Tibial artery (tissue), 4 donors: ENCODE measurements at regions of chr18 and their contacts with region 1.

Region 1: DNA sequence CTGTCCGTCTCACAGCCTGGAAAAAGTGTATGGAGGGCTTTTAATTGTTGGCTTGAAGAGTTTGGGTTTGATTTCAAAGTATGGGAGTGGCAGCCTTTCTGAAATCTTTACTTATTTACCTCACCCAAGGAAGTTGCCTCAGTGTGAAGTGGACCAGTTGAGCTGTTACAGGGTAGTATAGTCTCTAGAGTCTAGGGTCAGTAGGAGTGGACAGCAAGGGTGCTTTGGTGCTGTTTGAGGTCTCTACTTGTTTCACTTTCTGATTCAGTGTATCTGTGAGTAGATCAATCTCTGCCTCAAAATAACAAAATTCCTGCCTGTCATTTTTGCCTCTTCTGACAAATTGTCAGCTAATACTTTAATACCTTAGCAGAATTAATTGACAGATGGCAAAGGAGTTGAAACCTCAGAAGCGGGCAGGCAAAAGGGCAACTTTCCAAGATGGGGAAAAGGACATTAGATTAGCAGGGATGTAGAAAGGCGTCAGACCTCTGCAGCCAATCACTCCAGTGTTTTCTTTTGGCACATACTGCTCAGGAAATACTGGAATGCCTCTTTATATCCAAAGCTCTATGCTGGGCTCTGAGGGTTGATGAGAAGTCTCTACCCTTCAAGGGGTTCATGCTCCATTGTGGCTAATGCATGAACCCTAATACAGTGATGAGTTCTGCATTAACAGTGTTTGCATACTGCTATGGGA is 5.9 kb downstream of the RIOK3 start:
- DNase-seq: no peak
- H3K4me3 ChIP-seq: no peak overlapping the region
- H3K27ac ChIP-seq: no peak overlapping the region
- H3K4me1 ChIP-seq: peaks cover 0 to 74% (median 40%) of the 10 kb centered on the region in 4 donors
- H3K27me3 ChIP-seq: no peaks in the 10 kb centered on the region
- CTCF ChIP-seq: no peak

Region 2: DNA sequence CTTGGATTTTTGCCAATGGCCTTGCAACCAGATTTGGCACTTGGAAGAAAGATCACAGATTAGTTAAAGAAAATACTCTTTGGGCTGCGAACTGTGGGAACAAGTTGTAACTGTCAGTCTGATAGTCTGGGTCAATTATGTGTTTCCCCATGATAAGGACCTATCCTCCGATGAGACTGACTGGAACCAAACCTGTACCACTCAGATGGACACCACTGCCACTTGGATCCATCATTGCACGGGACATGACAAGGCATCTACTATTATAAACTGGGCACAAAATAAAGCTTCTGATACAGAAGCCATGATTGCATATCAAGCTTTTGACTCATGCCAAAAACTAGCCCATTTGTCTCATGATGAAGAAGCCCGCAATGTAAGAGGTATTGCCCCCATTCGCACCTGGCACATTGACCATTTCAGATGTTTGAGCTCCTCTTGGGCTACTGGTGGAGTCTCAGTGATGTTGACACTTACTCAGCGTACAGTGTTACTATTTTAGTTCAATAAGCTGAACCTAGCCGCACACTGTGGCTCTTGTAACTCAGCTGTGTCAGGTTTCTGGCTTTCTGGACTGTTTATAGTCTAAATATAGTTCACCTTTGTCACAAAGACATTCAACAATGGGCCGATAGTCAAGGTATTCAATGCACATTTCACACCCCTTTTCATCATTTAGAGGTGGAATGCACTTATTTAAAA is 705.7 kb before region 1 on chr18:
- intact Hi-C with region 1: no loop called
- DNase-seq: no peak
- H3K4me3 ChIP-seq: no peak overlapping the region
- H3K27ac ChIP-seq: no peak overlapping the region
- H3K4me1 ChIP-seq: no peaks in the 10 kb centered on the region
- H3K27me3 ChIP-seq: no peaks in the 10 kb centered on the region
- CTCF ChIP-seq: no peak

Region 3: DNA sequence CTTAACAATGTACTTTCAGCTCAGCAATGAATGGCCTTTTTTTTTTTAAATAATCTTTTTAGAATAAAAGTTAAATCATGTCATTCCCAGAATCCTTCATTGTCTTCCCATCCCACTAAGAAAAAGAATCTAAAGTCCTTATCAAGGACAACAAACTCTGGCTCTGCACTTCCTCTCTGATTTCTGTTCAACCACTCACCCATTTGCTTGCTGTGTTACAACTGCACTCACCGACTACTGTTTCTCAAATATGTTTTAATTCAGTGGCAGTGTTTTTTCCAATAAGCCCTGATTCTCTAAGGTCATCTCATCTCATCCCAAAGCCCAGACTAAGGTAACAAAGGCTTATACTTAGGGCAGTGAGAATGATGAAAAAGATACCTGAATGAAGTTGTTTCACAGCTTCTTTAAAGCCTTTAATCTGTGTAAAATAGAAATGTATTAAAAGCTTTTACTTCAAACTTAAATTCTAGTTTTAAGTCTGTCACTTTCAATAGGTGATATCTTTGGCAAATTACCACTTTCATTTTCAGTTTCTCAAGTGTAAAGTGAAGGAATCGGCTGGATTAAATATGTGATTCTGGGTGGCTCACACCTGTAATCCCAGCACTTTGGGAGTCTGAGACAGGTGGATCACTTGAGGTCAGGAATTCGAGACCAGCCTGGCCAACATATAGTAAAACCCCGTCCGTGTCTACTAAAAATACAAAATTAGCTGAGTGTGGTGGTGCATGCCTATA is 438.3 kb before region 1 on chr18:
- intact Hi-C with region 1: no loop called
- DNase-seq: no peak
- H3K4me3 ChIP-seq: no peak overlapping the region
- H3K27ac ChIP-seq: no peak overlapping the region
- H3K4me1 ChIP-seq: no peaks in the 10 kb centered on the region
- H3K27me3 ChIP-seq: no peaks in the 10 kb centered on the region
- CTCF ChIP-seq: no peak

Region 4: DNA sequence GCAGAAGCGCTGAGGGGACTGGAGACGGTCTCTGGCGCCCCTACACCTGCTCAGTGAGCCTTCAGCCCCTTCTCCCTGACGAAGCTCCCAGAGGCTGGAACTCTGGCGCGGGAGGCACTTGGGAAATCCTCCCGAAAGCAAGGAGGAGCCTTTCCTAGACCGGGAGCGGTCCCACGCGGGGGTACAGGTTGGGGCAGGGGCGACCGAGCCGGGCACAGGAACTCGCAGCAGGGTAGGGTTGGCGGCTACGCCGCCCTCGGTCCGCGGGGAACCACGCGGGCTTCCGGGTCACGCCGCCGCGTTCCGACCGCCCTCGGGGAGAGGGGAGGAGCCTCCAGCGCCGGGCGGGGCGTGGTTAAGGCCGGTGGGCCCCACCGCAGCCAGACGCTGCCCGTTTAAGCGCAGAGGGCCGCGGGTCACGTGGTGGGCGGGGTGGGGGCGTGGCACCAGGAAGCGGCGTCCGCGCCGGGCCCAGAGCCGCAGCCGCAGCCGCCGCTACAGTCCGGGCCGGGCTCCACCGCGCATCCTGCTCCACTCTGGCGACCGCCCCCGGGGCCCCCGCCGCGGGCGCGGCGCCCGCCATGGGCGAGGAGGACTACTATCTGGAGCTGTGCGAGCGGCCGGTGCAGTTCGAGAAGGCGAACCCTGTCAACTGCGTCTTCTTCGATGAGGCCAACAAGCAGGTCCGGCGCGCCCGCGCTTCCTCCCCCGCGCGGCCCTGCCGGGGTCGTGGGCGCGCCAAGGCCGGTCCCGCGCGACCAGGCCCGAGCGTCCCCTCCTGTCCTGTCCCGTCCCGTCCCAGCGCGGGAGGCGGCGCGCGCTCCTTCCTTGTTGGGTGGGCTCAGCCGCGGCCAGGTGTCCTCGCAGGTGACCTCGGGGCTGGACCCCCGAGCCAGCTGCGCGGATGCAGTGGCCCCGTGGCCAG is 44.3 kb after region 1 on chr18 and contains the start of gene RMC1:
- intact Hi-C with region 1: loop called (anchors 5 kb)
- DNase-seq: peak; percentile 92 to 97
- H3K4me3 ChIP-seq: peak within 1 kb of the TSS; percentile 89 to 99
- H3K27ac ChIP-seq: peak within 1 kb of the TSS; percentile 90 to 93
- H3K4me1 ChIP-seq: peaks cover 0 to 41% (median 28%) of the 10 kb centered on the region in 4 donors
- H3K27me3 ChIP-seq: no peaks in the 10 kb centered on the region
- CTCF ChIP-seq: peak in 1 of 2 experiments; percentile 16